Cardiac septum (tissue), 1 donor: ENCODE measurements at regions of chr4 and their contacts with region 1.

Region 1: GRCh38 chr4:68630373-68630772 is 40.1 kb downstream of the UGT2B15 start:
- DNase-seq: no peak

Region 2: GRCh38 chr4:68490826-68491457 is 139.4 kb before region 1 on chr4:
- intact Hi-C with region 1: loop called (anchors 5 kb)
- DNase-seq: no peak

Region 3: DNA sequence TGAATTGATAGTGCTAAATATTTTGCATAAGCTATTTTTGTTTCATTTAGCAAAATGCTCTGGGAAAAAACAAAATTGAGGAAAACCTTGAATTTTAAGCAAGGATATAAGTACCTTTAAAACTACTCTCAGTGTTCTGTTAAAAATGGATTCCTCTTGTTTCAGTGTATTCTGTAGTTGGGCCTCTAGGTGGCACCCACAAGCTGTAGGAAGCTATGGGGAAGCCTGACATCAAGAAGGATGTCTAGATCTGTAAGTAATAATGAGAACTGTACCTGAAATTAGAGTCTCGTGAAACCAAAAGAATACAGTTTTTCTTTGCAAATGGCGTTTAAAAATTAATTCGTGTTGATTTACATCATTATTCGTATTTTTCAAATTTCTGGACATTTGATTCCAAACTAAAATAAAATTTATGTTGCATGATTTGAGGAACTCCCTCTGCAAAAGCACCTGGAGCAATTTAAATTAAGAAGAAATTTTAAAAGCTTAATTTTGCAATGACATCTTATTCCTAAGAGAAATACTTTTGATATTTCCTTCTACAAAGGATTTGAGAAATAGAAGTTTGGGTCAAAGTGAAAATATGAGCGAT is 131.9 kb before region 1 on chr4:
- intact Hi-C with region 1: loop called (anchors 5 kb)
- DNase-seq: no peak

Region 4: DNA sequence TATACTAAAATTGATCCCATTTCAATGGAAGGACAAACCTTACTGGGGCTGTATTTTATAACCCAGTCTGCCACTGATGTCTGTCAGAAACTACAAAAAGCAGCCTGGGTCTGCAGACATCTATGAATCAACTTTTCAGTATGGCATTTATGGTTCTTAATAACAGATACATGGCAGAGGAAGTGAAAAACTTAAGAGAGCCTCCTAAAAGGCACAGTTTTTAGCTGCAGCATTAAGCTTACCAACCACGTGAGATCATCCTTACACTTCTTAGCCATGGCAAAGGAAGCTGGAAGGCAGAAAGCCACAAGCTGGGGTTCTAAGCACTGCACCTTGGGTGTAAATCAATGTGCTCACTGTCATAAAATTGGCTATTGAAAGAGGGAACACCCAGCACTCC is 37.7 kb before region 1 on chr4:
- intact Hi-C with region 1: no loop called
- DNase-seq: no peak

Region 5: DNA sequence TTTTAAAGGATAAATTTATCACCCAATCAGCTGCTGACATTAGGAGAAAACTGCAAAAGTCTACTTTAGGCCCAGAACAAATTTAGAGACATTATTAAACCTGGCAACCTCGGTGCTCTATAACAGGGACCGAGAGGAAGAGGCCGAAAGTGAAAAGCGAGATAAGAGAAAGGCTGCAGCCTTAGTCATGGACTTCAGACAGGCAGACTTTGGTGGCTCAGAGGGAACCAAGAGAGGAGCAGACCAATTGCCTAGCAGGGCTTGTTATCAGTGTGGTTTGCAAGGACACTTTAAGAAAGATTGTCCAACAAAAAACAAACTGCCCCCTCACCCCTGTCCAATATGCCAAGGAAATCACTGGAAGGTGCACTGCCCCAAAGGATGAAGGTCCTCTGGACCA is 172.6 kb after region 1 on chr4:
- intact Hi-C with region 1: no loop called
- DNase-seq: no peak